ENCODE measurements at regions of chr4 and their contacts with region 1.

Region 1: DNA sequence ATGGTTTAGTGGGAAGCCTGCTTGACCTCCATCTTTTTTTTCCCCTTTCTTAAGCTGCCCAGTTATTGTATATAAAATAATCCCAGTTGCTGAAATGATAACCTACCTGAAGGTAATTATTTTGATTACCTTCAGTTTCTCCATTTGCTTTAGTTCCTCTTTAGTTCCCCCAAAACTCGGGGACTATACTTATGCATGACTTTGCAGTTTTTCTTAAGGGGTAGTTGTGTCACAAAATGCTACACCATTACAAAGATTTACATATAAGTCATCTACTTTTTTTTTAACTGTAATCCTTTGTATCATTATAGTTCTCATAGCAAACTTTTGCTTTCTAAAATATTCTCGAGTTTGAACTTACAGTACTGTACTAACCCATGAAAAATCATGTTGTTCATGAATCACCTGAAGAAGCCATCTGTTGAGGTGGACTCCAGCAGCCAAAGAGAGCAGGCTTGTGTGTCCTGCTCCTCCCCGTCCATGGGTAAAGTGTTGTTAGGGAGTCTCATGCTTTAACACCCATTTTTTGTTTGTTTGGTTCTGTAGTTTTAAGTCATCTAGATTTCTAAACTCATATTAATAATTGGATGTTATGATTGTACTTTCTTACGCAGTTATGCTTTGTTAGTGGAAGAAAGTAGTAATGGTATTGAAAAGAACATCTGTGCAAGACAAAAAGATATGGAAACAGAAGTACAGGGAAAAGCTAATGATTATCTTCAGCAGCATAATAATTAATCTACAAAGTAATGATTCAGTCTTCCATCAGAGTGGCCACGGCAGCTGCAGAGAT is 34.6 kb downstream of the HADH start:
- DNase-seq: no peak
- H3K4me3 ChIP-seq: no peak overlapping the region
- H3K27ac ChIP-seq: no peak overlapping the region
- H3K4me1 ChIP-seq: no peaks in the 10 kb centered on the region
- H3K27me3 ChIP-seq: no peaks in the 10 kb centered on the region
- CTCF ChIP-seq: no peak
- POLR2A ChIP-seq: no peak

Region 2: DNA sequence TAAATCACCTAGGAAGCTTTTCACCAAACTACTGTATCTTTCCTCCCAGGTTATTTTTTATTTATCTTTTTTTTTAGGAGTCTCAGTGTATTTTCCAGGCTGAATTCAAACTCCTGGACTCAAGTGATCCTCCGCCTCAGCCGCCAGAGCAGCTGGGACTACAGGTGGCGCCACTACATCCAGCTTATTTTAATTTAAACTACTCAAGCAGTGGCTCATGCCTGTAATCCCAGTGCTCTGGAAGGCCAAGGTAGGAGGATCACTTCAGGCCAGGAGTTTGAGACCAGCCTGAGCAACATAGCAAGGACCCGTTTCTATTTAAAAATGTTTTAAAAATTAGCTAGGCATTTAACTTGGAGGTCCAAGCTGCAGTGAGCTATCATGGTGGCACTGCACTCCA is 106.7 kb after region 1 on chr4:
- intact Hi-C with region 1: no loop called
- DNase-seq: no peak
- H3K4me3 ChIP-seq: no peak overlapping the region
- H3K27ac ChIP-seq: no peak overlapping the region
- H3K4me1 ChIP-seq: peaks cover 0 to 19% of the 10 kb centered on the region in 2 donors
- H3K27me3 ChIP-seq: no peaks in the 10 kb centered on the region
- CTCF ChIP-seq: no peak
- POLR2A ChIP-seq: no peak

Region 3: GRCh38 chr4:108570993-108571569 is 546.8 kb after region 1 on chr4:
- intact Hi-C with region 1: loop called (anchors 5 kb)
- DNase-seq: no peak
- H3K4me3 ChIP-seq: no peak overlapping the region
- H3K27ac ChIP-seq: no peak overlapping the region
- H3K4me1 ChIP-seq: no peaks in the 10 kb centered on the region
- H3K27me3 ChIP-seq: no peaks in the 10 kb centered on the region
- CTCF ChIP-seq: no peak
- POLR2A ChIP-seq: no peak

Measured in thyroid gland (tissue), 4 donors.